Activated CD4-positive, alpha-beta memory T cell treated with anti-CD3 and anti-CD28 coated beads for 36 hours (primary cell): ENCODE measurements at regions of chr5 and their contacts with region 1.

Region 1: DNA sequence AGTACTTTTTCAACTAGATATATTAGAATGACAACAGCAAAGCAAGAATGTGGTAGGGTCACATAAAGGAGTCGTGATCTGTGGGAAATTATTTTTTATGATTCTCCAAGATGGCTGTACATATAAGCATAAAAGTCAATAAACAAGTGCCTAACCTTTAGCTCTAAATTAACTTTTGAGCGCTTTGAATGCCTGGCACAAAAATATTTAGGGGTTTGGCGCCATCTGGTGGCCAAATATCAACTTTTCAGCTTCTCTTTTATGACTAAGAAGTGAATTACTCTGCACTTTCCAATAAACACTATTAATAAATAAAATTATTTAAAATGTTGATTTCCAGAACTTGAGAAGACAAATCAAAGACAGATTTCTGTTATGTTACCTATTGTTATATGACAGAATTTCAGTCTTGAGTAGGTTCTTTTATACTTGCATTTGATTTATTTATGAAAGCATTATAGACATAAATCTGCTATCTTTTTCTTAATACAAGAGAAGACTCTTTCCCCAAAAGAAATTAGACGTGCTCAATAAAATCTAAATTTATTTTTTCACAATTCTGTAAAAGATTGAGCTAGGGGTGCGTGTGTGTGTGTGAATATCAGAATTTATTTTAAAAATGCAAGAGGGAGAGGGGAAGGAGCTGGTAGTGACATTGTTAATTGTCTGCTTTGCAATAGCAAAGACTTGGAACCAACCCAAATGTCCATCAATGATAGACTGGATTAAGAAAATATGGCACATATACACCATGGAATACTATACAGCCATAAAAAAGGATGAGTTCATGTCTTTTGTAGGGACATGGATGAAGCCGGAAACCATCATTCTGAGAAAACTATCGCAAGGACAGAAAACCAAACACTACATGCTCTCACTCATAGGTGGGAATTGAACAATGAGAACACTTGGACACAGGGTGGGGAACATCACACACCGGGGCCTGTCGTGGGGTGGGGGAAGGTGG is 36.7 kb upstream of the ARRDC3 start:
- DNase-seq: peak; percentile 74
- H3K4me3 Mint-ChIP-seq: no peak overlapping the region
- H3K27ac Mint-ChIP-seq: no peak overlapping the region
- H3K4me1 Mint-ChIP-seq: no peaks in the 10 kb centered on the region
- H3K27me3 Mint-ChIP-seq: no peaks in the 10 kb centered on the region

Region 2: GRCh38 chr5:90802474-90803317 is 617.2 kb before region 1 on chr5:
- CTCF ChIA-PET with region 1: interaction called, 13 read pairs
- POLR2A ChIA-PET with region 1: no interaction called
- intact Hi-C with region 1: loop called (anchors 2 kb)
- DNase-seq: no peak
- H3K4me3 Mint-ChIP-seq: no peak overlapping the region
- H3K27ac Mint-ChIP-seq: no peak overlapping the region
- H3K4me1 Mint-ChIP-seq: no peaks in the 10 kb centered on the region
- H3K27me3 Mint-ChIP-seq: peaks cover 1% of the 10 kb centered on the region

Region 3: DNA sequence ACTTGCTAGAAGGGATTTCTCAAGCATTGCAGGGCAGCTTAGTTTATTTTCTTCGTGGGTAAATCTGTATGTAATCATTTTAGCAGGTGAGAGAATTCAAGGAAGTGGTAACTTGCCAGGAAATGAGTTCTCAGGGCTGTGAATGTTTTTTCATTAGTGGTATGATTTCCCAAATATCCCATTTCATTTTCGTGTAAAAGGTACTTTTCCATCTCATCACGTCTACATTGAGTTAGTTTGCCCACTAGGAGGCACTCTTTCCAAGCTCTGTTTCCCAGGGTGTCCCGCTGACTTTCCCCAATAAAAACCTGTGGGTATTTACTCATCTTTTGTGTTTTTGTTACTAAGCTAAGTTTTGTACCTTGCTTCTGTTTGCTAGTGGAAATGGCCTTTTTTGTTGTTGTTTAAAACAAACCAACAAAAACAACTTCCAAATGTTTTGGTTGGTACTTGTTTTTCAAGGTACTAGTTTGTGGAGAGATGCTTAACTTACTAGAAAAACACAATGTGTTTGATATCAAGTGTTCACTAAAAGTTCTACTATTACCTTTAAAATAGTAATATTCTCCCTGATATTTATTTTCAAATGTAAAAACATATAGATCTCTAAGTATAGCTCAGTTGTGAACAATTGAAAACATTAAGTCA is 487.7 kb before region 1 on chr5:
- CTCF ChIA-PET with region 1: interaction called, 72 read pairs
- POLR2A ChIA-PET with region 1: interaction called, 3 read pairs
- intact Hi-C with region 1: loop called (anchors 1 kb)
- DNase-seq: peak; percentile 37
- H3K4me3 Mint-ChIP-seq: no peak overlapping the region
- H3K27ac Mint-ChIP-seq: no peak overlapping the region
- H3K4me1 Mint-ChIP-seq: no peaks in the 10 kb centered on the region
- H3K27me3 Mint-ChIP-seq: peaks cover 10% of the 10 kb centered on the region

Region 4: GRCh38 chr5:91219803-91220371 is 200.0 kb before region 1 on chr5:
- CTCF ChIA-PET with region 1: interaction called, 74 read pairs
- POLR2A ChIA-PET with region 1: no interaction called
- intact Hi-C with region 1: no loop called
- DNase-seq: peak; percentile 50
- H3K4me3 Mint-ChIP-seq: no peak overlapping the region
- H3K27ac Mint-ChIP-seq: no peak overlapping the region
- H3K4me1 Mint-ChIP-seq: no peaks in the 10 kb centered on the region
- H3K27me3 Mint-ChIP-seq: peaks cover 2% of the 10 kb centered on the region

Region 5: DNA sequence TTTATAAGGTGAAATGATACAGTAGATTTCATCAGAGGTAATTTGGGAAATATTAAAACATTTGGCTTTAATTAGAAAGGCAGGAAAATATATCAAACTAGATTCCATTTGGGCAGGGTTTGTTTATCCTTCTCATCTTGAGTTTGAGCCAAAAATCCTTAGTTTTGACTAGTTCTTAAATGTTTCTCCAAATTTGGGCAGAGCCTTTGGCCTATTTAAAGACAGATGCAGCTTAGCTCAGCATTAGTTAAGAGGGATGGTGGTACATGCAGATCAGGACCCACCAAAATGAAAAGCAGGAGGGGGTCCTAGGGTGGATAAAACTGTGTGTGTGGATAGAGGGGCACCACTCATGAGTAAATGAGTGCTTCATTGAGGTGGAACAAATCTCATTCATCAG is 16.4 kb before region 1 on chr5:
- CTCF ChIA-PET with region 1: interaction called, 19 read pairs
- POLR2A ChIA-PET with region 1: no interaction called
- intact Hi-C with region 1: no loop called
- DNase-seq: no peak
- H3K4me3 Mint-ChIP-seq: no peak overlapping the region
- H3K27ac Mint-ChIP-seq: no peak overlapping the region
- H3K4me1 Mint-ChIP-seq: no peaks in the 10 kb centered on the region
- H3K27me3 Mint-ChIP-seq: no peaks in the 10 kb centered on the region

Region 6: GRCh38 chr5:91433861-91434260 is 14.0 kb after region 1 on chr5:
- CTCF ChIA-PET with region 1: interaction called, 15 read pairs
- POLR2A ChIA-PET with region 1: interaction called, 3 read pairs
- intact Hi-C with region 1: no loop called
- DNase-seq: no peak
- H3K4me3 Mint-ChIP-seq: no peak overlapping the region
- H3K27ac Mint-ChIP-seq: peak overlapping the region; percentile 25
- H3K4me1 Mint-ChIP-seq: peaks cover 20% of the 10 kb centered on the region
- H3K27me3 Mint-ChIP-seq: no peaks in the 10 kb centered on the region